Activated naive CD4-positive, alpha-beta T cell treated with anti-CD3 and anti-CD28 coated beads, Interleukin-2, amount 10 ng/mL, durations not matched to agents 7 days and 5 days (primary cell): ENCODE measurements at regions of chr10 and their contacts with region 1.

Region 1: GRCh38 chr10:87750001-87750671 is 67.9 kb downstream of the ATAD1 start:
- DNase-seq: no peak
- H3K4me3 Mint-ChIP-seq: no peak overlapping the region
- H3K27ac Mint-ChIP-seq: no peak overlapping the region
- H3K4me1 Mint-ChIP-seq: no peaks in the 10 kb centered on the region
- H3K27me3 Mint-ChIP-seq: no peaks in the 10 kb centered on the region

Region 2: GRCh38 chr10:87635610-87636312 is 114.4 kb before region 1 on chr10:
- CTCF ChIA-PET with region 1: no interaction called
- DNase-seq: peak; percentile 32
- H3K4me3 Mint-ChIP-seq: no peak overlapping the region
- H3K27ac Mint-ChIP-seq: no peak overlapping the region
- H3K4me1 Mint-ChIP-seq: peaks cover 7% of the 10 kb centered on the region
- H3K27me3 Mint-ChIP-seq: no peaks in the 10 kb centered on the region

Region 3: GRCh38 chr10:87734987-87735827 is 14.9 kb before region 1 on chr10:
- CTCF ChIA-PET with region 1: interaction called, 11 read pairs
- DNase-seq: no peak
- H3K4me3 Mint-ChIP-seq: no peak overlapping the region
- H3K27ac Mint-ChIP-seq: no peak overlapping the region
- H3K4me1 Mint-ChIP-seq: no peaks in the 10 kb centered on the region
- H3K27me3 Mint-ChIP-seq: peaks cover 22% of the 10 kb centered on the region

Region 4: GRCh38 chr10:87767253-87767652 is 17.1 kb after region 1 on chr10:
- CTCF ChIA-PET with region 1: no interaction called
- DNase-seq: no peak
- H3K4me3 Mint-ChIP-seq: no peak overlapping the region
- H3K27ac Mint-ChIP-seq: no peak overlapping the region
- H3K4me1 Mint-ChIP-seq: peaks cover under 1% of the 10 kb centered on the region
- H3K27me3 Mint-ChIP-seq: no peaks in the 10 kb centered on the region